Pancreas (tissue), 10 donors: ENCODE measurements at regions of chr1 and their contacts with region 1.

Region 1: DNA sequence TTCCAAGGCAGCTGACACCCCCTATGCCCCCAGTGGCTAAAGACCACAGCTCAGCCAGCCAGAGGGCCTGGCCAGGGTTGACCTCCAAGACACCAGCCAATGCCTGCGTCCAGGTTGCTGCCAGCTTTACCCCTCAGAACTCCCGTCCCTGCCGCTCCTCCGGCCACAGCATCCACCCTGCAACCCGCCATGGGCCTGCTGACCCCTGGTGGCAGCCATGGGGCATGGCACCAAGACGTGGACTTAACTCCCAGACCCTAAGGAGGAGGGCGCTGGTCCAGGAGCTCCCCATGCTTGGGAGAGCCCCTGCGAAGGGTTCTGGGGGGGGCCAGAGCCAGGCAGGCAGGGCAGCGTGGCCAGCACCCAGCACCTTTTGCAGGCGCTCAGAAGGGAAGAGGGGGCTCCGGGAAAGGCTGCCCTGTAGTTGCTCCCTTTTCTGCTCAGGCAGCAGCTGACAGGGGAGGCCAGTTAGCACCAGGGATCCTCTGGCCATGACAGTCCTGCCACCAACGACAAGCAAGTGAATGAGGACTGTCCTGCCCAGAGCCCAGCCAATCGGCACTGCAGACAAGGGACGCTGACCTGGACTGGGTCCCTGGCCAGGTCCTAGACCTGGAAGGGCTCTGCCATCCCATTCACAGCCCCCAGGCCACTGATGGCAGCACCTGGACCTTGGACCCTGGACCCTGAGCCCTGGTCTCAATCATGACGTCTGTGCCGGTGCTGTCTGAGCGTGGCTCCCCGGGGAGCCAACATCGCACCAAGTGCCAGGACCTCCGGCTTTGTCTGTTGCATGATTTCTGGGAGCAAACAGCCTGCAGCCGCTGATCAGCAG is 246.2 kb downstream of the NPHP4 start:
- DNase-seq: peak; percentile 36 to 92 (median 74)
- ATAC-seq: peak; percentile 88 to 98 (median 96)
- H3K4me3 ChIP-seq: no peak overlapping the region
- H3K27ac ChIP-seq: no peak overlapping the region
- H3K4me1 ChIP-seq: no peaks in the 10 kb centered on the region
- H3K27me3 ChIP-seq: peaks cover 0 to 6% (median 2%) of the 10 kb centered on the region in 4 donors
- CTCF ChIP-seq: peak; percentile 93 to 97 (median 96)

Region 2: DNA sequence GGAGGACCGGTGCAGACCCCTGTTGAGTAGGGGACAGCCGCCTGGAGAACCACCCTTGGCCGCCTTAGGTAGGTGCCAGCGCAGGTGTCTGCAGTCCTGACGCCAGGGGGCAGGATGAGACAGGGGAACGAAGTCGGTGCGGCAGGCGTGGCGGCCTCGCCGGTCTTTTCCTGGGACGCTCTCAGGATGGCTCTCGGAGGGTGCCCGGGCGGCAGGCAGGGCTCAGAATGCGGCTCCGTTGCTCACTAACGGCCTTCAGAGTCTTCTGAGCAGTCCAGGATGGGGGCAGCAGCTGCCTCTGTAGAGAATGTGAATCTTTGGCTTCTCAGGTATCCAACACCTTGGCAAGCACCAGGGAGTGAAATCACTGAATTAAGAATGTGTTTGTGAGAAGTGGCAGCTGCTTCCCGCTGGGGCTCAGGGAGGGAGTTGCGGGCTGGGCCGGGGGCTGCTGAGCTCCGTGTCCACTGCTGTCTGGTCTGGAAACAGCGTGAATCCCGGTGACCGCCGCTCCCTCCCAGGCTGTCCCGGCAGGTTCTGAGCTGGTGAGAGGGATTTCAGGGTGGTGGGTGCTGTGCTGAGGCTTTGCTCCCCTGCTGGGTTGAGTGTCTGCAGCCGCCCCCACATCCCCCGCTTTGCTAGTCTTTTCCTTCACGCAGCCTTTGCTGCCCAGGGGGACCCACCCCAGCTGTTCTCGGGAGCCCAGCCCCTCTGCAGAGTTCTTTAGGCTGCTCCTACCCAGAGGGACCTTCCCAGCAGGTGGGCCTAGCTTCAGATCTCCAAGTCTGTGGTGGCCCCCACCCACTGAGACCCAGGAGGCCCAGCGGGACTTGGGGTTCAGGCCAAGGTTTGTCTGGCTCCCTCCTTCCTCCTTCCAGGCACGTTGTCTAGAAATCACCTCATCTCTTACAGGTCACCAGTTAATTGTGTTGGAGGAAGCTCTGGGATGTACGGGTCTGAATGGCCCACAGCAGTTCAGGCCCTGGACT is 1834.8 kb before region 1 on chr1:
- intact Hi-C with region 1: loop called in 1 of 3 experiments (anchors 10 kb)
- DNase-seq: peak; percentile 67 to 94 (median 84)
- ATAC-seq: peak; percentile 90 to 98 (median 96)
- H3K4me3 ChIP-seq: peak overlapping the region in 1 of 4 donors; percentile 19
- H3K27ac ChIP-seq: no peak overlapping the region
- H3K4me1 ChIP-seq: no peaks in the 10 kb centered on the region
- H3K27me3 ChIP-seq: no peaks in the 10 kb centered on the region
- CTCF ChIP-seq: peak; percentile 60 to 76 (median 72)

Region 3: DNA sequence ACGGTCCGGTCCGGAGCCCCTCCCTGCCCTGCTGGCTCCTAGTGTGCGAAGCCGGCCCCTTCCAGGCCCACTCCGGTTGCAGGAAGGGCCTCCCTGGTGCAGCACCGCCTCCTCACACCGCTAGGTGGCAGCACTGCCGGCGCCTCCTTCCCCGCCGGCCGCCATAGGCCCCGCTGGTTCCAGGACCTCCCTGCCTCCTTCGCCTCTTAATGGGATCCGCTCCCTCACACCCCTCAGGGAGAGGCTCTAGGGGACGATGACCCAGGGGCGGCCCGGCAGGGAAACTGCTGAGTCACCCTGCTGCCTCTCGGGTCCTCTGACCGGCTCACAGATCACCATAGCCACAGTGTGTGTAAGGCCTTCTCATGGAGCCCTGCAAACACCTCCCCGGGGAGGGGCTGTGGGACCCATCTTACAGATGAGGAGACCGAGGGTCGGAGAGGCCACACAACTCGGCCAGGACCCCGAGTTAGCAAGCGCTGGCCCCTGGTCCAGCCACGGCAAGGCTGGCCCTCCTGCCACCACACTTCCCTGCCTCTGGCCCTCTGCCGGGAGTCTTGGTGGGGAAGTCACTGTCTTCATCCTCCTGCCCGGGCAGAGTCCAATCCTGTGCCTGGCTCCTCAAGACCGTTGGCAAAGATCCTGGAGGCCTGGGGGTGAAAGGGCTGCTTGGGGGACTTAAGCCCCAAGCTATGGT is 1093.2 kb before region 1 on chr1:
- intact Hi-C with region 1: loop called in 2 of 3 experiments (anchors 10 kb)
- DNase-seq: peak; percentile 28 to 89 (median 69)
- ATAC-seq: peak; percentile 74 to 88 (median 86)
- H3K4me3 ChIP-seq: no peak overlapping the region
- H3K27ac ChIP-seq: no peak overlapping the region
- H3K4me1 ChIP-seq: no peaks in the 10 kb centered on the region
- H3K27me3 ChIP-seq: peaks cover 0 to 23% (median 0%) of the 10 kb centered on the region in 4 donors
- CTCF ChIP-seq: peak; percentile 95 to 99 (median 97)

Region 4: DNA sequence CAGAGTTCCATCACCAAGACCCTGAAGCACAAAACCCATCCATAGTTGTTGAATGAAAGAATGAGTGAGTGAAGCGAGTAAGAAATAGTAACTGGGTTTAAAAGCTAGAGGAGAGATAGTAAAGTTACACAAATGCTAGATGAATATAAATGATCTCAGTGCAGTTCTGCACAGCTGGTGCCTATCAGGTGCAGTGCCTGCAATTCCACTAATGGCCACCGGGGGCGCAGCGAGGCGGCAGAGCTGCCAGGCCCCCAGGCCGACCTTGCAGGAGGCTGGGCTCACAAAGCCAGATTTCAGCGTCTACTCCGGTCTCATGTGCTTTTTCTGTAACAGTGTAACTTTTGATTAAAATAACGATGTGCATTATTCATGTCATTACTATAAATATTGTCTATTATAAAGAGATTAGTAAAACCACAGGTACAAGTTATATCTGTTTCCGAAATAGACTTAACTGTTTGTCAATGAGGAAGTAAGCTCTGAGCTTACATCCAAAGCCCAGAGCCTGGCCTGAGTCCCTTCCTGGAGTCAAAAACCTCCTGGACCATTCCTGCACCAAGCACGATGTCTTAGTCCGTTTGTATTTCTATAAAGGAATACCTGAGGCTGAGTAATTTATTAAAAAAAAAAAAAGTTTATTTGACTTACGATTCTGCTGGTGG is 231.3 kb before region 1 on chr1:
- intact Hi-C with region 1: loop called (anchors 10 kb)
- DNase-seq: peak; percentile 51 to 98 (median 82)
- ATAC-seq: peak; percentile 77 to 91 (median 90)
- H3K4me3 ChIP-seq: no peak overlapping the region
- H3K27ac ChIP-seq: no peak overlapping the region
- H3K4me1 ChIP-seq: peaks cover 0 to 10% (median 4%) of the 10 kb centered on the region in 3 donors
- H3K27me3 ChIP-seq: no peaks in the 10 kb centered on the region
- CTCF ChIP-seq: peak; percentile 100

Region 5: GRCh38 chr1:5632224-5632623 is 113.8 kb before region 1 on chr1:
- intact Hi-C with region 1: no loop called
- DNase-seq: no peak
- ATAC-seq: no peak
- H3K4me3 ChIP-seq: no peak overlapping the region
- H3K27ac ChIP-seq: no peak overlapping the region
- H3K4me1 ChIP-seq: no peaks in the 10 kb centered on the region
- H3K27me3 ChIP-seq: no peaks in the 10 kb centered on the region
- CTCF ChIP-seq: no peak